ENCODE measurements at regions of chr3 and their contacts with region 1.

Region 1: GRCh38 chr3:148718982-148719862 is 21.5 kb downstream of the AGTR1 start:
- DNase-seq: no peak
- H3K4me3 ChIP-seq: no peak overlapping the region
- H3K27ac ChIP-seq: no peak overlapping the region
- H3K4me1 ChIP-seq: no peaks in the 10 kb centered on the region
- H3K27me3 ChIP-seq: no peaks in the 10 kb centered on the region
- CTCF ChIP-seq: peak in 4 of 5 experiments; percentile 25 to 41 (median 34)
- EP300 ChIP-seq: no peak
- POLR2A ChIP-seq: no peak

Region 2: DNA sequence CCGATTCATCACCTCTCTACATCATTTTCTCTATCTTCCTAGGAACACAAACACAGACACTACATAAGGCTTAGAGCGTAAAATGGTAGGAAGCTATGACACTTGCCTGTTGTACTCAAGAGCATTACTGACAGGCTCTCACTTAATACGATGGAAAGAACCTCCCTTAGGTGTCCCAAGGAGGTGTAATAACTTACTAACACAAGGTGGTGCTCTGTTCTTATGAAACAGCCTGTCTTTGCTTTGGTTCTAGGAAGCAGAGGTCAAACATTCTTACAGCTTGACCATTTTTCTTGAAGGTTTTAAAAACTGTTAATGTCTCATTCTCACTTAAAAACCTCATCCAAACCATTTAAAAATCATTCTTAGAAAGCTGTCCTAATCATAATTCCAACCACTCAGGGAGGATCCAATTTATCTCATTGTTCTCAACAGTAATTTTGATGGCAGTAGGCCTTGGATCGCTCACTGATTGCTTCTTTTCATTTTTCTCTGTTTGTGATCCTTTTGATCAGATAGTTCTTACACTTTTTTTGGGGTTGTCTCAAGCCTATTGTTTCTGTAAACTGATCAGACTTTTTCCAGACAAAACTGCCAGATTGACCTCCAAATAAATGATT is 339.3 kb before region 1 on chr3:
- in situ Hi-C with region 1: loop called in 2 of 4 experiments (anchors 25 kb)
- intact Hi-C with region 1: no loop called
- DNase-seq: no peak
- H3K4me3 ChIP-seq: no peak overlapping the region
- H3K27ac ChIP-seq: no peak overlapping the region
- H3K4me1 ChIP-seq: no peaks in the 10 kb centered on the region
- H3K27me3 ChIP-seq: no peaks in the 10 kb centered on the region
- CTCF ChIP-seq: peak; percentile 35 to 59 (median 45)
- EP300 ChIP-seq: no peak
- POLR2A ChIP-seq: no peak

Region 3: DNA sequence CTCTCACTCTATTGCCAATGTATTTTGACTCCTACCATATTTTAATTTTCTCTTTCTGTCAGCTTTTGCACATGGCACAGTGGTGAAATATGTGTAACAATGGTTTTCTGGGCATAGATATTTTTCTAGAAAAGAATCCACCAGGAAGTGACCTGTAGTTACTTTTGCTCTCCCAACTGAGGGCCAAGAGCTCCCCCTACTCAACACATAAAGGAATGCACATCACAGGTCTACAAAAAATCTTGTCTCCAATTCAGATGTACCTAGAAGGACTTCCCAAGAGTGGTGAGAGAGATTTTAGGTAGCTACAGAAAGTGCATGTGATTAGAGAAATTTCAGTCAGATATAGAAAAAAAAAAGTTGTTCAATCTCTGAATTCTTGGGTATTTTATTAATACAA is 161.5 kb after region 1 on chr3:
- in situ Hi-C with region 1: no loop called
- intact Hi-C with region 1: no loop called
- DNase-seq: no peak
- H3K4me3 ChIP-seq: no peak overlapping the region
- H3K27ac ChIP-seq: no peak overlapping the region
- H3K4me1 ChIP-seq: no peaks in the 10 kb centered on the region
- H3K27me3 ChIP-seq: no peaks in the 10 kb centered on the region
- CTCF ChIP-seq: no peak
- EP300 ChIP-seq: no peak
- POLR2A ChIP-seq: no peak